ENCODE measurements at regions of chr21 and their contacts with region 1.

Region 1: GRCh38 chr21:25983745-25984144 is 186.8 kb downstream of the APP start:
- DNase-seq: peak in 2 of 5 donors; percentile 30 to 33
- ATAC-seq: peak; percentile 80 to 91 (median 88)
- H3K4me3 ChIP-seq: no peak overlapping the region
- H3K27ac ChIP-seq: peak overlapping the region in 11 of 12 donors; percentile 5 to 55 (median 25)
- H3K4me1 ChIP-seq: peaks cover 0 to 35% (median 16%) of the 10 kb centered on the region in 12 donors
- H3K27me3 ChIP-seq: no peaks in the 10 kb centered on the region
- CTCF ChIP-seq: no peak
- POLR2A ChIP-seq: no peak

Region 2: DNA sequence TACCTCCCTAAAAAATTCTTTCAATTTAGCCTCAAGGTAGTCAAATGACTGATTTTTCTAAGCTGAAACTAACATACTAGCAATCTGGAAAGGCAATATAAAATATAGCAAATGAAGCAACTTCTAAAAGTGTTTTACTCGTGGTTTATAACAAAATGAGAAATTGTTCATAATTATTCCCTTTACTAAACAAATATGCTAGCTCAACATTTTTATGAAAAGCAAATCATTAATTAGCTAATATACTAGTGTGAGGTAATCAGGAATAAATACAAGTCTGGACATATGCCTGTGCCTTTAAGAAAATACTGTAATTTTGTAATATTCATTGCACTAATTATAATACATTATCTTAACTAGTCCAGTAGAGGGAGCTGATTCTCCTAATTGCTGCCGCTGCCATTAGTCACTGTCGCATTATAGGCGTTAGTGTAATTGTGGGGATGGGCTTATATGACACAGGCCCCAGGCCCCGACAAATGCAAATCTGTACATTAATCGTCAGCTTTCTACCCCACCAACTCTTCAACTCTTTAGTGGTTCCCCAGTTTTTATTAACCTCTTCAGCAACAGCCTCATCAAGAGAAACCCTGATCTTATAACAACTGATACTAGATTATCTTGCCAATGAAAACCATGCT is 88.1 kb before region 1 on chr21:
- intact Hi-C with region 1: loop called in 1 of 10 experiments (anchors 10 kb)
- DNase-seq: no peak
- ATAC-seq: peak in 3 of 4 donors; percentile 74 to 85 (median 83)
- H3K4me3 ChIP-seq: no peak overlapping the region
- H3K27ac ChIP-seq: no peak overlapping the region
- H3K4me1 ChIP-seq: peaks cover 0 to 25% (median 7%) of the 10 kb centered on the region in 12 donors
- H3K27me3 ChIP-seq: no peaks in the 10 kb centered on the region
- CTCF ChIP-seq: peak; percentile 47 to 76 (median 64)
- POLR2A ChIP-seq: no peak

Region 3: GRCh38 chr21:25925936-25926335 is 57.8 kb before region 1 on chr21:
- intact Hi-C with region 1: loop called in 2 of 10 experiments (anchors 5 to 10 kb)
- DNase-seq: peak in 3 of 5 donors; percentile 28 to 47 (median 31)
- ATAC-seq: peak; percentile 77 to 94 (median 86)
- H3K4me3 ChIP-seq: no peak overlapping the region
- H3K27ac ChIP-seq: peak overlapping the region; percentile 51 to 77 (median 71)
- H3K4me1 ChIP-seq: peaks cover 7 to 53% (median 24%) of the 10 kb centered on the region in 12 donors
- H3K27me3 ChIP-seq: no peaks in the 10 kb centered on the region
- CTCF ChIP-seq: no peak
- POLR2A ChIP-seq: no peak

Region 4: DNA sequence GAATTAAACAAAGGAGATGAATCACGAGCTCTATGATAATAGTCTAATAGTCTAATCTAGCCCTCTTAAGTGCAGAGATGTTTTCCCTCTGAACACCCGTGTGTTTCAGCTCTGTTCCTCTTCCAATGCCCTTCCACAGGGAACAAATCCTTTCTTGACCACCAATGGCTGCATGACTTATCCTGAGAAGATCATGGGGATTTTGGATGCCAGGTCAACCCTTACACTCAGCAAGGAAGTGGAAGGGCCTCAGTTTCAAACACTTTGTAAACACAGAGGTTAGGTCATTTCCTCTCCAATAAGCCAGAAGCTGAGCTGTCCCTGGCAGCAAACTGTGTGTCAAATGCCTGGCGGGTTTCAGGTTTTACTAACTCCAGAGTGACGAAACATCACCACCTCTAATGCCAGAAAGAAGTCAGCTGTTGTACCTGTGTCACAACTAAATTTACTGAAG is 48.9 kb before region 1 on chr21:
- intact Hi-C with region 1: loop called in 3 of 10 experiments (anchors 5 to 10 kb)
- DNase-seq: peak; percentile 68 to 81 (median 77)
- ATAC-seq: peak; percentile 88 to 95 (median 95)
- H3K4me3 ChIP-seq: no peak overlapping the region
- H3K27ac ChIP-seq: peak overlapping the region; percentile 14 to 73 (median 62)
- H3K4me1 ChIP-seq: peaks cover 3 to 67% (median 32%) of the 10 kb centered on the region in 12 donors
- H3K27me3 ChIP-seq: no peaks in the 10 kb centered on the region
- CTCF ChIP-seq: no peak
- POLR2A ChIP-seq: no peak

Measured in heart left ventricle (tissue), 16 donors.